ENCODE measurements at regions of chr11 and their contacts with region 1.

Region 1: GRCh38 chr11:57644748-57645688 is 4.7 kb downstream of the YPEL4 start:
- DNase-seq: peak; percentile 90
- H3K4me3 Mint-ChIP-seq: no peak overlapping the region
- H3K27ac Mint-ChIP-seq: no peak overlapping the region
- H3K4me1 Mint-ChIP-seq: peaks cover 36% of the 10 kb centered on the region
- H3K27me3 Mint-ChIP-seq: peaks cover 42% of the 10 kb centered on the region

Region 2: DNA sequence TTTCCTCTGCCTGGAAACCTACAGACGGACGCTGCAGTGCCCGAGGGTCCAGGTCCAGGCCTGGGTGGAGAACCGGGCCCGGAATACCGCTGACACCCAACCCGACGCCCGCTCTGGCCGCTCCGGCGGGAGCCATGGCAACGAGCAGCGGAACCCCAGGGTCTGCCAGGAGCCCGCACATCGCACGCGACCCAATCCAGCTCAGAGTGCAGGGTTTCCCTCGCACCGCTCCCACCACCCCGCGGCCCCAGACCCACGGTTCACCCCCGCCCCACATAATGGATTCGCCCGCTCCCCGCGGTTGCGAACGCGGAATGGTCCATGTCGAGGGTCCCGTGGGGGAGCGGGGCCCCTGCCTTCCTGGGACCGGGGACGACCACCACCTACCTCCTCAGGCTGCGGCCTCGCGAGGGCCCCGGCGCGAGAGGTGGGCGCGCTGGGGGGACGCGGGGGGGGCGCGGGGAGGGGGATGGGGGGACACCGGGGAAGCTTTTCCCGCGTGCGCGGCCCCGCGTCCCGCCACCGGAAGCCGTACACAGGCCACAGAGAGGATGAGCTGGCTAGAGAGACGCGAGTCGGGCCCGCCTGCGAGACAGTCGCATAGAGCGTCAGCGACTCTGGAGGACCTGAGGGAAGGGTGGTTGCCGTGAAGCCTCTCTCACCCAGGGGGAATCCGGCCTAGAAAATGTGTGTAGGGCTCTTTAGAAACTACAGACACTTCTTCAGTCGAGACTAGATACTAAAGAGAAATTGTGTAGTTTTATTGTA is 309.5 kb before region 1 on chr11 and contains the start of gene SSRP1:
- CTCF ChIA-PET with region 1: interaction called, 8 read pairs
- POLR2A ChIA-PET with region 1: no interaction called
- intact Hi-C with region 1: loop called (anchors 5 kb)
- DNase-seq: peak; percentile 92
- H3K4me3 Mint-ChIP-seq: peak within 1 kb of the TSS; percentile 91
- H3K27ac Mint-ChIP-seq: peak within 1 kb of the TSS; percentile 98
- H3K4me1 Mint-ChIP-seq: peaks cover 47% of the 10 kb centered on the region
- H3K27me3 Mint-ChIP-seq: no peaks in the 10 kb centered on the region
- total RNA-seq, gene SSRP1: 256 to 262 TPM

Region 3: GRCh38 chr11:57493507-57494503 is 151.2 kb before region 1 on chr11:
- CTCF ChIA-PET with region 1: interaction called, 121 read pairs
- POLR2A ChIA-PET with region 1: interaction called, 3 read pairs
- intact Hi-C with region 1: loop called (anchors 2 kb)
- DNase-seq: peak; percentile 87
- H3K4me3 Mint-ChIP-seq: no peak overlapping the region
- H3K27ac Mint-ChIP-seq: peak overlapping the region; percentile 83
- H3K4me1 Mint-ChIP-seq: peaks cover 9% of the 10 kb centered on the region
- H3K27me3 Mint-ChIP-seq: no peaks in the 10 kb centered on the region

Region 4: GRCh38 chr11:57567515-57568329 is 77.3 kb before region 1 on chr11 and contains the start of gene UBE2L6:
- CTCF ChIA-PET with region 1: interaction called, 104 read pairs
- POLR2A ChIA-PET with region 1: interaction called, 4 read pairs
- intact Hi-C with region 1: loop called (anchors 1 kb)
- DNase-seq: peak; percentile 70
- H3K4me3 Mint-ChIP-seq: peak within 1 kb of the TSS; percentile 92
- H3K27ac Mint-ChIP-seq: peak within 1 kb of the TSS; percentile 98
- H3K4me1 Mint-ChIP-seq: peaks cover 31% of the 10 kb centered on the region
- H3K27me3 Mint-ChIP-seq: no peaks in the 10 kb centered on the region
- total RNA-seq, gene UBE2L6: 152 to 162 TPM

Region 5: DNA sequence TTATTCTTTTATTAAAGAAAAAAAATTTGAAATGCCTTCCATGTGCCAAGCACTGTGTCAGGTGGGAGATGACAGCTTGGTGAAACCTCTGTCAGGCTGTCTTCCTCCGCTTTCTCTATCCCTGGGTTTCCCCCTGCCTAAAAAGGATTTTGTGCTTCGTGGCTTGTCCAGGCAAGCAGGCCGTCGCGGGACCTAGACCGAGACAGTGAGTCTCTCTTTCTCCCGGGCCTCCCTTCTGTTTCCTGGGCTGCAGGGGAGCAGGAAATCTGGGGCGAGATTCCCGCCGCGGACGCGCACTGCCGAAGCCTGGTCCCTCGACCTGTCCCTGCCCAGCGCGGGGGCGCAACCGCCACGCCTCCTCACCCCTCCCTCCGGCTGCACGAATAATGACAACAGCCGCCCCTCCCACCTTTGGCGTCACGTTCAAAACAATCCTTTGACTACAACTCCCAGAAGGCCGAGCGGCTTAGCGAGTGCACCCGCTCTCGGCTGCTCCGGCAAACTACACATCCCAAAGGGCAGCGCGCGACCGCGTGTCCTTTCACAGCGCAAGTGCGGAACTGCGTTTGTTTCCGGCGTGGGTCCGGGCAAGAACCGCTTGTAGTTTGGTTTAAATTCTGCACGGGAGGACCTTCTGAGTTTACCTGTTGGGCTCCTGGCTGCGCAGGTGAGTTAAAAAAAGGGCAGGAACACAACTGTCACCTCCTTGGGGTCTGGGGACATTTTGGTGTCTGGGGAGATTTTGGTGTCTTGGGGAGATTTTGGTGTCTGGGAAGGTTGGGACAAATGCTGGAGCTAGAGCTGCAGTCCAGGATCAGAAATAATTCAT is 12.4 kb after region 1 on chr11 and contains the start of gene CLP1:
- CTCF ChIA-PET with region 1: interaction called, 17 read pairs
- POLR2A ChIA-PET with region 1: interaction called, 3 read pairs
- intact Hi-C with region 1: no loop called
- DNase-seq: peak; percentile 100
- H3K4me3 Mint-ChIP-seq: peak within 1 kb of the TSS; percentile 100
- H3K27ac Mint-ChIP-seq: peak within 1 kb of the TSS; percentile 94
- H3K4me1 Mint-ChIP-seq: peaks cover 33% of the 10 kb centered on the region
- H3K27me3 Mint-ChIP-seq: no peaks in the 10 kb centered on the region
- total RNA-seq, gene CLP1: 13.9 to 15.2 TPM

Measured in activated CD4-positive, alpha-beta memory T cell treated with anti-CD3 and anti-CD28 coated beads for 36 hours (primary cell).